ENCODE measurements at regions of chr7 and their contacts with region 1.

Region 1: GRCh38 chr7:83701736-83702135 is 52.8 kb upstream of the SEMA3E start:
- DNase-seq: no peak
- H3K4me3 ChIP-seq: no peak overlapping the region
- H3K27ac ChIP-seq: no peak overlapping the region
- H3K4me1 ChIP-seq: peaks cover 7% of the 10 kb centered on the region
- H3K27me3 ChIP-seq: no peaks in the 10 kb centered on the region
- CTCF ChIP-seq: no peak
- POLR2A ChIP-seq: no peak

Region 2: DNA sequence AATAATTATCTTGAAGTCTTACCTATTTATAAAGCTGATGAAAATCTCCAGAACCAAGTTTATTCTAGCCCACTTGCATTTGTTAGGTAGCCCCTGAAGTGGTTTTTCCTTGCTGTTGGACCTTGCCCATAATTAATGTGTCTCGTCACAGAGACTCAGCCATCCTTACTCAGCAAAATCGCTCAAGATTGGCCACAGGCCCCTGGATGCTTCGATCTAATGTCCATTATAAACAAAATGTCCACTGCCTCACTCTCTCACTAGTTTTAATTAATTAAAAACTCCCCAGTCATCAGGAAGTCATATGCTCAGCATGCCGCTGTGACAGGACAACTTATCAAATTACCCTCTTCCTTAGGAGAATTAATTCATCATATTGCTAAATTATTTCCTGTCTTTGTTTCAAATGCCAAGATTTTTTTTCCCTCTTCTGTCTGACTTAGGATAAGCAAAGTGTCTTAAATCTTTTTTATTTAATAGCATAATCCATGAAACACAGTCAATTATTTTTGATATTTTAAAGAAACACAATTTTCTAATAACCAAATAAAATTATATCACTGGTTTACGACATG is 412.2 kb before region 1 on chr7:
- intact Hi-C with region 1: loop called (anchors 10 kb)
- DNase-seq: no peak
- H3K4me3 ChIP-seq: no peak overlapping the region
- H3K27ac ChIP-seq: no peak overlapping the region
- H3K4me1 ChIP-seq: no peaks in the 10 kb centered on the region
- H3K27me3 ChIP-seq: no peaks in the 10 kb centered on the region
- CTCF ChIP-seq: no peak
- POLR2A ChIP-seq: no peak

Measured in vagina (tissue), 2 donors.